ENCODE measurements at regions of chr12 and their contacts with region 1.

Region 1: DNA sequence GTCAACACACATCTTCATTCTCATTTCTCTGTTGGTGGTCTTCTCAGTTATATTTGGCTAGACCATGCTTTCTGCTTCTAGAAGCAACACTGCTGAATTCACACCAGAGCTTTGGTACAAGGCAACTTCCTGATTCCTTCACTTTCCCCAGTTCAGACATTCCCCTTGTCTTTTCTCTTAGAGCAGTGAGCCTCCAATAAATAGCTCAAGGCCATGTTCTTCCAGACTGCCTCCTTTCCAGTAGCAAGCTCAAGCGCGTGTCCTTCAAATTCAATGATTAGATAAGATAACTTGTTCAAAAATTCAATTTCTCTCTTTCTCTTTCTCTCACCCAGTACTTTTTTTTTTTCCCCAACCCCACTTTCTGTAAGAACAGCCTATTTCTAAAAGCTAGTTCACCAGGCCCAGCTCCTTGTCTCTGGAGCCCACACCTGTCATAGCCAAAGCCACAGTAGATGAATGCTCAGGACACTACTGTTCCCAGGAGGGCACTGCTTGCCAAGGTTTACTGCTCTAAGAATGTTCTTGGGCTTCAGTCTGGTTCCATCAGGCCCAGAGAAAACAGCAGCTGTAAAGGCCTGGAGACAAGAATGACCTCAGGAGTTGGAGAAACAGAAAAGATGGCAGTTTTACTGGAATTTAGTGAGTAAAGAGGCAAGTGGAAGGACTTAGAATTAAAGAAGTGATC is 17.7 kb downstream of the TBK1 start:
- H3K4me3 ChIP-seq: no peak overlapping the region
- H3K27ac ChIP-seq: 0 out of 2 replicates have a peak overlapping the region, but pooled peaks have one; percentile 4
- H3K4me1 ChIP-seq: no peaks in the 10 kb centered on the region
- CTCF ChIP-seq: no peak

Region 2: GRCh38 chr12:64510667-64511066 is 41.1 kb after region 1 on chr12:
- CTCF ChIA-PET with region 1: no interaction called
- POLR2A ChIA-PET with region 1: interaction called, 10 read pairs
- H3K4me3 ChIP-seq: no peak overlapping the region
- H3K27ac ChIP-seq: no peak overlapping the region
- H3K4me1 ChIP-seq: no peaks in the 10 kb centered on the region
- CTCF ChIP-seq: no peak

Measured in HEK293 (cell line).